PC-9 (cell line): ENCODE measurements at regions of chr1 and their contacts with region 1.

Region 1: DNA sequence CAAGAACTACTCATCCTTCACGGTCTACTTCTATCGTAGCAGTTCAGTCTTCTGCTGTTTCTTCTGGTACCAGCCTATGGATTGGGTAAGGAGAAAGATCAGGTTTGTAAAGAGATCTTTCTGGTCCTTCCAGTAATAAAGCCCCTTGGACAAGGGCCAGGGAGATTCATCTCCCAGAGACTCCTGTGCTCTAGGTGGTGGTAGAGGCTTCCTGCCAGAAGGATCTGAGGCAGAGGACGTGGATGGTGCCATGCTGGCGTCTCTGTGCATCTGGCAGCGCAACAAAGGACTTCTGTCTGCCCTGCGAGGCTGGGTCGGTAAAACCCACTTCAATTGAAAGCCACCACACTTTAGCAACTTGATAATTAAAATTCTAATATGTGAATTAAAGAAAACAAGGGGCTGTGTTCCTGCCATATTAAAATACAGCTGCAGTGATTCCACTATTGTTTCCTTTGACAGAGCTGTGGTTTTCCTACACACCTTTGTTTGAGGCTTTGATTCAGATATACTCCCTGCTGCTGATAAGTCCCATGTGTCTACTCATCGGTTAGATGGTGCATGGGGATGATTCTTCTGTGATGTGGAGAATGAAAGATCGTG is 73.6 kb downstream of the ROR1 start:
- DNase-seq: peak; percentile 55 to 80
- H3K4me3 ChIP-seq: no peak overlapping the region
- H3K27ac ChIP-seq: 0 out of 2 replicates have a peak overlapping the region, but pooled peaks have one; percentile 9
- H3K4me1 ChIP-seq: peaks cover 14% of the 10 kb centered on the region
- H3K27me3 ChIP-seq: no peaks in the 10 kb centered on the region
- CTCF ChIP-seq: no peak

Region 2: DNA sequence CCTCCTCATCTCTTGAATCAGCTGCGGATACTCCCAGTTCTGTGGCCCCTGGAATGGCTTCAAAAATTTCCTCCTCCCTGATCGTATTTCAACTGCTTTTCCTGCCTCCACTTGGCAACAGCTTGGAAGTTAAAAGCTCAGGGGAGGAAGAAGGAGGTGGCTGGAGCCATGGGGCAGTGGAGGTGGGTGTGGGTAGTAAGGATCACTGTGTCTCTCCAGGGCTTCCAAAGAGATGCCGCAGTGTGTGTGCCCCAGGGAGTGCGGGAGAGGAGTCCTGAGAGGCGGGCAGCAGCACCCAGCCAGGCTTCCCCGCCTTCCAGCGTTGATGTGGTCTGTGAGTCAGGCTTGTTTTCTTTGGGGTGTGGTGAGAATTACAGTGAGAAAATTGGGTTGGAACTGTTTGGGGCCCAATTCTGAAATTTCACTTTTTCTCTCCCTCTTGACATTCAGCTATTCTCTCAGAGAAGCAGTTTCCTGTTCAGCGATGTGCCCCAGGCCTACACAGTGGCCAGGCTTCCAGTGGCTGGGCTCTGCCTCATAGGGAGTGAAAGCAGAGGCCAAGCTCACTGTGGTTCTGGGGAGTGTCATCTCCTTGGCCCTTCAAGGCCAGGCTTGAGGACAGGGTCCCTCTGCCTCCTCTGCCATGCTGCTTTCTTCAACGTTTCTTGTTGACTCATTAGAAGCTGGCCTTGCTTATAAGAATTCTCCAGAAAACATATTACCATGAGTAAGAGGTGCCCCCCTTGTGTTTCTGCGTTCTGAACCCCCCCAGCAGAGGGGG is 185.2 kb before region 1 on chr1:
- CTCF ChIA-PET with region 1: no interaction called
- POLR2A ChIA-PET with region 1: no interaction called
- intact Hi-C with region 1: loop called (anchors 1 kb)
- DNase-seq: peak; percentile 91 to 93
- H3K4me3 ChIP-seq: peak overlapping the region; percentile 45; the same call in 1 of the 2 replicates
- H3K27ac ChIP-seq: peak overlapping the region; percentile 100
- H3K4me1 ChIP-seq: peaks cover 62% of the 10 kb centered on the region
- H3K27me3 ChIP-seq: no peaks in the 10 kb centered on the region
- CTCF ChIP-seq: no peak

Region 3: GRCh38 chr1:63773815-63774616 is 73.4 kb before region 1 on chr1 and contains the start of gene ROR1:
- CTCF ChIA-PET with region 1: interaction called, 5 read pairs
- POLR2A ChIA-PET with region 1: interaction called, 3 read pairs
- intact Hi-C with region 1: loop called (anchors 1 kb)
- DNase-seq: peak; percentile 72 to 91
- H3K4me3 ChIP-seq: peak within 1 kb of the TSS; percentile 93
- H3K27ac ChIP-seq: peak within 1 kb of the TSS; percentile 60
- H3K4me1 ChIP-seq: peaks cover 50% of the 10 kb centered on the region
- H3K27me3 ChIP-seq: no peaks in the 10 kb centered on the region
- CTCF ChIP-seq: peak; percentile 62
- total RNA-seq, gene ROR1: 16.0 and 19.0 TPM in 2 replicates

Region 4: GRCh38 chr1:63877816-63878215 is 30.4 kb after region 1 on chr1:
- CTCF ChIA-PET with region 1: no interaction called
- POLR2A ChIA-PET with region 1: interaction called, 7 read pairs
- intact Hi-C with region 1: loop called (anchors 2 kb)
- DNase-seq: peak; percentile 65 to 96
- H3K4me3 ChIP-seq: peak overlapping the region; percentile 1; the same call in 1 of the 2 replicates
- H3K27ac ChIP-seq: peak overlapping the region; percentile 94
- H3K4me1 ChIP-seq: peaks cover 70% of the 10 kb centered on the region
- H3K27me3 ChIP-seq: no peaks in the 10 kb centered on the region
- CTCF ChIP-seq: no peak

Region 5: DNA sequence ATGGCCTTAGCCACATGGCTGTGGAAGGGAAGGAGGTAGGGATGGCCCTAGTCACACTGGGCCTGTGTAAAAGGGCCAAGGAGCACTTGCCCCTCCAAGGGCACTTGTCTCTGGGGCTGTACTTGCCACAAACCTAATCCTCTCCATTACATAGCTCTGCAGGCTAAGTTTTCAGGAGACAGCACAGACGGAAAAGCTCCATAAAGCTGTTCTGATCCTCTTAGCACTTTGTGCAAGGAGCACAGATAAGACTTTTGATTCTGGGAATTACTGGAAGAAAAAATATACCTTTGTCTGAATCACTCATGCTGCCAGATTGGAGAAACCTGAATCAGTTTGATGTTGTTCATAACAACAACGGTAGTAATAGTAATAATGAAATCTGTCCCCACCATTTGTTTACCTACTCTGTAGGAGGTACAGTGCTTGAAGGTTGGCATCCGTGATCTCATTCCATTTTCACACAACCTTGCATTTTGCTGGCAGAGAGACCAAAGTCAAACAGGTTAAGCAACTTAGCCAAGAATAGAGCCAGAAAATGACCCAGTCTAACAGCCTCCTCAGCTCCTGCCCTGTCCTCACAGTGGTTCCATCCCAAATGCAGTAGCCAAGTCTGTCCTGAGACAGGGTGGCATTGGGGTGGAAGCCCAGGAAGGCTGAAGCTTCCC is 133.5 kb after region 1 on chr1:
- CTCF ChIA-PET with region 1: no interaction called
- POLR2A ChIA-PET with region 1: no interaction called
- intact Hi-C with region 1: loop called (anchors 1 kb)
- DNase-seq: peak; percentile 74 to 95
- H3K4me3 ChIP-seq: peak overlapping the region; percentile 4; the same call in 1 of the 2 replicates
- H3K27ac ChIP-seq: peak overlapping the region; percentile 81
- H3K4me1 ChIP-seq: peaks cover 40% of the 10 kb centered on the region
- H3K27me3 ChIP-seq: no peaks in the 10 kb centered on the region
- CTCF ChIP-seq: no peak

Region 6: DNA sequence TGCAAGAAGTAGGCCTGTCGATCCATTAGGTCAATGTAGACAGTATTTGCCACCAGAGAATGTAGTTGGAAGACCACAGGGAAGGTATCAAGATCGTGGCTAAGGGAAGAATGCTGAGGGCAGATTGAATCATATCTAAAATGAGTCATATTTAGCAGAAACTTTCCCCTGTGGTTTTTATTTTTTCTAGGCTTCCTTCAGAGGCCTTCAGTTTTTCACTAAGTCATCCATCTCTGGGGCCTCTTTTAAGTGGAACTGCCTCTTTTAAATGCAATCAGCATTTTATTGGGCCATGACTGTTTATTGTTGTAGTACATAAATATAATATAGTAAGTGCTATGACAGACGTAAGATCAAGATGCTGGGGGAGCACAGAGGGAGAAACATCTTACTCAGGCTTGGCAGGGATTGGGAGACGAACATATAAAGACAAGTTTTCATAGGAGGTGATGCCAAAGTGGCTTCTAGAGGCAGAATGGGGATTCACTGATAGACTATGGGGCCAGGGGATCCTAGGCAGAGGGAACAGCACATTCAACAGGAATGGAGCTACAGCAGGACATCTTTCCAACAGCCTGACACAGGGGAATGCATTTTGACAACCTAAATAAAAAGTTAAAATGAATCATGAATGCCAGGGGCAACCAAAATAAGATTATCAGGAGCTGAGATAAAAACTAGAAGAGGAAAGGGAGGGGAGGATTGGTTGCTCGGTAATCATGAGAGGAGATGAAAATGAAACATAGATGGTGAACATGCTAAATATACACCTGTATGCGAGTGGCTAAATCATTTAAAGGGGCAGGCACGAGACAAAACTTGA is 376.1 kb after region 1 on chr1:
- CTCF ChIA-PET with region 1: no interaction called
- POLR2A ChIA-PET with region 1: no interaction called
- intact Hi-C with region 1: loop called (anchors 5 kb)
- DNase-seq: peak; percentile 11 to 74
- H3K4me3 ChIP-seq: no peak overlapping the region; the same call in 1 of the 2 replicates
- H3K27ac ChIP-seq: peak overlapping the region; percentile 83
- H3K4me1 ChIP-seq: peaks cover 14% of the 10 kb centered on the region
- H3K27me3 ChIP-seq: no peaks in the 10 kb centered on the region
- CTCF ChIP-seq: no peak